Astrocyte of the cerebellum (primary cell): ENCODE measurements at regions of chr7 and their contacts with region 1.

Region 1: DNA sequence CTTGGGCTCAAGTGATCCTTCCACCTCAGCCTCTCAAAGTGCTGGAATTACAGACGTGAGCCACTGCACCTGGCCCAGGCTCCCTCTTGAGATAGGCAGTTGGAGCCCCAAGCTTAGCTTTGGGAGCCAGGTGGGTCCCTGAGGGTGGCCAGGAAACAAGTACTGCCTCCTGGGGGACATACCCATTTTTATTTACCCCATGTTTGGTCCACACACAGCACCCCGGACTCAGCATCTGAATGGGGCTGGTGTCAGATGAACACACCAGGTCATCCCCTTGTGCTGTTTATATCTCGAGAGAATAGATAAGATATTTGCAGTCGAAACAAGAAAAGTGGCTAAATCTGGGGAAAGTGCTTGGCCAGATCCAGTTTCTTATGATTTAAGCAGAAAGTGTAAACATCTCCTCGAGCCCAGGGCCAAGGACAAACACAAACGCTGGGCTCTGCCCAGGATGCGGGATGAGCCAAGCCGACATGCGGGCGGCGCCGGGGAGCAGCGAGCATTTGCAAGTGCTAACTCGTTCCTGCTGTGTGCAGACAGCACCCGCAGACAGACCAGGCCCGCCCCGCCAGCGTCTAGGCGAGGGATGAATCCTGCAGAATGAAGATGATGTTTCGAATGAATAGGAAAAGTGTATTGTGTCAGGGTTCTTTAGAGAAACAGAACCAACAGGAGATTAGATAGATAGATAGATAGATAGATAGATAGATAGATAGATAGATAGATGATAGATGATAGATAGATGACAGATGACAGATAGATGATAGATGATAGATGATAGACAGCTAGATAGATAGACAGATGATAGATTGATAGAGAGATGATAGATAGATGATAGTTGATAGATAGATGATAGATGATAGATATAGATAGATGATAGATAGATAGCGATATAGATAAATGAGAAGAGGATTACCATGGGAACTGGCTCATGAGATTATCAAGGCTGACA is 44.4 kb upstream of the OCM2 start:
- DNase-seq: no peak
- H3K4me3 ChIP-seq: no peak overlapping the region
- CTCF ChIP-seq: no peak

Region 2: DNA sequence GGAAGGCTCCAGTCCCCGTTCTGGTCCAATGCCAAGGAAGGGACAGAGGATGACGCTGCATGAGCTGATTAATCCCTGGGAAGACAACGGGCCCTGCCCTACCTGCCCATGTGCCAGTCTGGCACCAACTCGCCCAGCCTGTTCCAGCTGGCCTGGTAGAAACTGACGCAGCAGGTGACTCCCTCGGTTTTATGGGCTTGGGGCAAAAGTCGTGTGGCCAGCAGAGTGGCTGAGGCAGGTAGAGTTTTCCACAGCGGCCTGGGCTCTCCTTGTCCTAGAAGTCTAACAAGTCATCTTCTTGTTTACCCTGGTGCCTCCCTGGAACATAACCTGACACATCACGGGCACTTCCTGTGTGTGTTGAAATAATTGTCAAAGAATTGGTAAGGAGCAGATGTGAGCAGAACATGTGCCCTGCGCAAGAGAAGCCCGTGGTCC is 51.9 kb after region 1 on chr7:
- in situ Hi-C with region 1: loop called (anchors 10 kb)
- DNase-seq: no peak
- H3K4me3 ChIP-seq: no peak overlapping the region
- CTCF ChIP-seq: no peak

Region 3: DNA sequence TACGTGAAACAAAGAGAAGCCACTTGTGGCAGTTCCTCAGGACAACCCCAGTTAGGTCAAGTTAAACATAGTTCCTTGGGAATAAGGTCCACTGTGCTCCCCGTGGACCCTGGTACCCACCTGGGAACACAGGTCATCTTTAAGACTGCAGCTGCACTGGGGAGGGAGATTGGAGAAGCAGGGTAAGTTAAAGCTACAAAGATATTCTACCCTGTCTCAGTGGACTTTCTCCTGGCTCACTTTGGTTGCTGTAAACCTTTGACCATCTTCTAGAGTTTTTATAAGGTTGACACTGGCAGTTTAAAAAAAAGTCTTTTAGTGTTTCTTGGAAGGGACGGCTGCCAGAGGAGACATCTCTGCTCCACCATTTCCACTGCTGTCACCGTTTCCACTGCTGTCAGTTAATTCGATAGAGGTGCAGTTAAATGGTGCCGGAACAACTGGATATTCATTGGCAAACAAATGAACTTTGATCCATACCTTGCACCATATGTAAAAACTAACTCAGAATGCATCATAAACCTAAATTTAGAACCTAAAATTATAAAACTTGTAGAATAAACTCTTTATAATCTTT is 114.8 kb after region 1 on chr7:
- in situ Hi-C with region 1: loop called (anchors 10 kb)
- DNase-seq: no peak
- H3K4me3 ChIP-seq: no peak overlapping the region
- CTCF ChIP-seq: no peak